Ascending aorta (tissue), 2 donors: ENCODE measurements at regions of chr2 and their contacts with region 1.

Region 1: GRCh38 chr2:219388127-219388844 is 574 bp upstream of the DNPEP start:
- DNase-seq: peak; percentile 90 to 99
- H3K4me3 ChIP-seq: peak overlapping the region; percentile 81 to 82
- H3K27ac ChIP-seq: peak overlapping the region; percentile 67 to 81
- H3K4me1 ChIP-seq: peaks cover 8 to 11% of the 10 kb centered on the region in 2 donors
- H3K27me3 ChIP-seq: no peaks in the 10 kb centered on the region
- CTCF ChIP-seq: peak; percentile 69 to 86 (median 74)

Region 2: GRCh38 chr2:219160186-219161017 is 227.9 kb before region 1 on chr2 and contains the start of gene NHEJ1:
- intact Hi-C with region 1: loop called (anchors 1 kb)
- DNase-seq: peak; percentile 88 to 98
- H3K4me3 ChIP-seq: peak within 1 kb of the TSS; percentile 66 to 86
- H3K27ac ChIP-seq: peak within 1 kb of the TSS; percentile 86 to 89
- H3K4me1 ChIP-seq: peaks cover 0 to 8% of the 10 kb centered on the region in 2 donors
- H3K27me3 ChIP-seq: no peaks in the 10 kb centered on the region
- CTCF ChIP-seq: peak; percentile 97 to 100 (median 100)
- total RNA-seq, gene NHEJ1: 21.6 TPM

Region 3: DNA sequence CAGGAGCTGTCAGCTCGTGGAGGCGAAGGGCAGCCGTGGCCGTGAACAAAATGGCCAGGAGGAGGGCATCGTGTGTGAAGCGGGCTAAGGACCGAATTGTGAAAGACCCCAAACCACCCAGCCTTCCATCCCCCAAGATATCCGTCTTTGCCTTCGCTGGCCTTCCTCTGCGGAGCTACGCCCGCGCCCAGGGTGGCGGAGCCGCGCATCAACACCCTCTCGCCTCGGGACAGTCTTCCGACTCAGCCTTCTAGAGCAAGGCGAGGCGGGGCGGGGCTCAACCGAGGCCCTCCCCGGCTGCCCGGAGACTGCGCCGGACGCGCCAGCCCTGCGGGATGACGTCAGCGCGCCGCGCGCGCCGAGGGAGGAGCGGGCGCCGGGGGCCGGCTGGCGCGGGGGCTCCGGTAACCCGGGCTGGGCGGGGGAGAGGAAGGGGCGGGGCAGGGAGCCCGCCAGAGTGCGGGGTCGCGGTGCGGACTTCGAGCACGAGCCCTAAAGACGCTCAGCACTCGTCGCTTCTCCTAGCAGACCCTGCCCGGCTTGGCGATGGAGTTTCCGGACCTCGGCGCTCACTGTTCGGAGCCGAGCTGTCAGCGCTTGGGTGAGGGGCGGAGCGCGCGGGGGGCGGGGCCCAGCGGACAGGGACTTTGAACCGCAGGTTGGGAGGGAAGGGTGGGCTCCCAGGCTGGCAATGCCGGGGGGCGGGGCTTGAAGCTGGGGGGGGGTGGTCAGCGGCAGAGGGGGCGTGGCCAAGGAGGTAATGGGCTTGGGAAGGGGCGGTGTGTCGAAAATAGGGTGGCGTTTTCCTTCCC is 181.6 kb before region 1 on chr2 and contains the start of gene ZFAND2B:
- intact Hi-C with region 1: loop called (anchors 2 kb)
- DNase-seq: peak; percentile 83 to 97
- H3K4me3 ChIP-seq: peak within 1 kb of the TSS; percentile 86 to 90
- H3K27ac ChIP-seq: peak within 1 kb of the TSS; percentile 91 to 99
- H3K4me1 ChIP-seq: peaks cover 0 to 6% of the 10 kb centered on the region in 2 donors
- H3K27me3 ChIP-seq: no peaks in the 10 kb centered on the region
- CTCF ChIP-seq: peak; percentile 9 to 34 (median 17)
- total RNA-seq, gene ZFAND2B: 225 TPM

Region 4: GRCh38 chr2:219245148-219245898 is 143.0 kb before region 1 on chr2 and contains the starts of genes GLB1L and STK16:
- intact Hi-C with region 1: loop called (anchors 1 kb)
- DNase-seq: peak; percentile 69 to 97
- H3K4me3 ChIP-seq: peak within 1 kb of the TSS; percentile 82 to 96
- H3K27ac ChIP-seq: peak within 1 kb of the TSS; percentile 96 to 99
- H3K4me1 ChIP-seq: peaks cover 20 to 40% of the 10 kb centered on the region in 2 donors
- H3K27me3 ChIP-seq: no peaks in the 10 kb centered on the region
- CTCF ChIP-seq: no peak
- total RNA-seq, gene GLB1L: 1.8 TPM
- total RNA-seq, gene STK16: 15.2 TPM

Region 5: GRCh38 chr2:219294356-219295351 is 93.6 kb before region 1 on chr2:
- intact Hi-C with region 1: loop called (anchors 5 kb)
- DNase-seq: peak in 1 of 2 donors; percentile 91
- H3K4me3 ChIP-seq: peak overlapping the region; percentile 62 to 67
- H3K27ac ChIP-seq: peak overlapping the region; percentile 83 to 86
- H3K4me1 ChIP-seq: peaks cover 0 to 16% of the 10 kb centered on the region in 2 donors
- H3K27me3 ChIP-seq: no peaks in the 10 kb centered on the region
- CTCF ChIP-seq: peak; percentile 97 to 99 (median 98)

Region 6: GRCh38 chr2:219543601-219544358 is 155.5 kb after region 1 on chr2 and contains the starts of genes CHPF and TMEM198:
- intact Hi-C with region 1: loop called (anchors 1 kb)
- DNase-seq: peak; percentile 96 to 99
- H3K4me3 ChIP-seq: peak within 1 kb of the TSS; percentile 87 to 90
- H3K27ac ChIP-seq: peak within 1 kb of the TSS; percentile 92 to 95
- H3K4me1 ChIP-seq: peaks cover 8 to 24% of the 10 kb centered on the region in 2 donors
- H3K27me3 ChIP-seq: no peaks in the 10 kb centered on the region
- CTCF ChIP-seq: no peak
- total RNA-seq, gene CHPF: 249 TPM
- total RNA-seq, gene TMEM198: 6.0 TPM

Region 7: GRCh38 chr2:219689676-219690628 is 301.7 kb after region 1 on chr2:
- intact Hi-C with region 1: loop called (anchors 1 kb)
- DNase-seq: peak in 1 of 2 donors; percentile 72
- H3K4me3 ChIP-seq: peak overlapping the region in 1 of 2 donors; percentile 52
- H3K27ac ChIP-seq: peak overlapping the region; percentile 87 to 88
- H3K4me1 ChIP-seq: peaks cover 6 to 30% of the 10 kb centered on the region in 2 donors
- H3K27me3 ChIP-seq: no peaks in the 10 kb centered on the region
- CTCF ChIP-seq: peak; percentile 60 to 74 (median 72)